CD4-positive, alpha-beta T cell (primary cell): ENCODE measurements at regions of chr20 and their contacts with region 1.

Region 1: GRCh38 chr20:62900052-62900691 is 26.1 kb downstream of the DIDO1 start:
- DNase-seq: peak; percentile 63 to 89 (median 76)
- ATAC-seq: peak; percentile 89
- H3K4me3 ChIP-seq: no peak overlapping the region
- H3K4me3 Mint-ChIP-seq: peak overlapping the region; percentile 71
- H3K27ac ChIP-seq: peak overlapping the region; percentile 8 to 47
- H3K27ac Mint-ChIP-seq: peak overlapping the region; percentile 92
- H3K4me1 ChIP-seq: peaks cover 29% of the 10 kb centered on the region
- H3K4me1 Mint-ChIP-seq: peaks cover 40% of the 10 kb centered on the region
- H3K27me3 ChIP-seq: no peaks in the 10 kb centered on the region
- H3K27me3 Mint-ChIP-seq: no peaks in the 10 kb centered on the region
- CTCF ChIP-seq: peak; percentile 96

Region 2: GRCh38 chr20:62914970-62915457 is 14.8 kb after region 1 on chr20:
- CTCF ChIA-PET with region 1: interaction called, 38 read pairs
- POLR2A ChIA-PET with region 1: interaction called, 14 read pairs
- intact Hi-C with region 1: loop called in 1 of 2 experiments (anchors 1 kb)
- DNase-seq: peak in 3 of 14 experiments; percentile 23 to 62 (median 55)
- ATAC-seq: peak; percentile 25
- H3K4me3 ChIP-seq: no peak overlapping the region
- H3K4me3 Mint-ChIP-seq: peak overlapping the region; percentile 72
- H3K27ac ChIP-seq: no peak overlapping the region
- H3K27ac Mint-ChIP-seq: peak overlapping the region; percentile 80
- H3K4me1 ChIP-seq: peaks cover 63% of the 10 kb centered on the region
- H3K4me1 Mint-ChIP-seq: peaks cover 88% of the 10 kb centered on the region
- H3K27me3 ChIP-seq: no peaks in the 10 kb centered on the region
- H3K27me3 Mint-ChIP-seq: no peaks in the 10 kb centered on the region
- CTCF ChIP-seq: no peak